ENCODE measurements at regions of chr7 and their contacts with region 1.

Region 1: GRCh38 chr7:64313740-64314491 is at the start of gene ZNF736:
- DNase-seq: peak; percentile 86 to 91 (median 89)
- H3K4me3 ChIP-seq: peak within 1 kb of the TSS; percentile 77 to 92 (median 91)
- H3K4me3 Mint-ChIP-seq: peak within 1 kb of the TSS; percentile 97 to 100
- H3K27ac ChIP-seq: peak within 1 kb of the TSS; percentile 81 to 98
- H3K27ac Mint-ChIP-seq: peak within 1 kb of the TSS; percentile 98 to 100 (median 100)
- H3K4me1 ChIP-seq: peaks cover 15 to 19% of the 10 kb centered on the region in 2 donors
- H3K4me1 Mint-ChIP-seq: peaks cover 23% of the 10 kb centered on the region
- H3K27me3 ChIP-seq: no peaks in the 10 kb centered on the region
- H3K27me3 Mint-ChIP-seq: peaks cover 0 to 1% (median 0%) of the 10 kb centered on the region in 3 donors
- CTCF ChIP-seq: no peak
- polyA plus RNA-seq, gene ZNF736: 1.3 to 7.1 (median 1.4) TPM

Region 2: GRCh38 chr7:63925623-63926460 is 388.1 kb before region 1 on chr7:
- intact Hi-C with region 1: loop called in 1 of 2 experiments (anchors 5 kb)
- DNase-seq: peak; percentile 78 to 88 (median 88)
- H3K4me3 ChIP-seq: peak overlapping the region; percentile 53 to 82 (median 82)
- H3K4me3 Mint-ChIP-seq: peak overlapping the region; percentile 92 to 93
- H3K27ac ChIP-seq: peak overlapping the region; percentile 65 to 84
- H3K27ac Mint-ChIP-seq: peak overlapping the region; percentile 84 to 97 (median 91)
- H3K4me1 ChIP-seq: peaks cover 13 to 21% of the 10 kb centered on the region in 2 donors
- H3K4me1 Mint-ChIP-seq: peaks cover 20% of the 10 kb centered on the region
- H3K27me3 ChIP-seq: no peaks in the 10 kb centered on the region
- H3K27me3 Mint-ChIP-seq: peaks cover 0 to 3% (median 2%) of the 10 kb centered on the region in 3 donors
- CTCF ChIP-seq: no peak

Region 3: GRCh38 chr7:64562626-64563275 is 248.8 kb after region 1 on chr7 and contains the start of gene ZNF680:
- intact Hi-C with region 1: loop called (anchors 5 kb)
- DNase-seq: peak; percentile 54 to 71 (median 65)
- H3K4me3 ChIP-seq: peak within 1 kb of the TSS; percentile 61 to 92 (median 66)
- H3K4me3 Mint-ChIP-seq: peak within 1 kb of the TSS; percentile 100
- H3K27ac ChIP-seq: peak within 1 kb of the TSS; percentile 46 to 82
- H3K27ac Mint-ChIP-seq: peak within 1 kb of the TSS; percentile 92 to 96 (median 95)
- H3K4me1 ChIP-seq: peaks cover 0 to 6% of the 10 kb centered on the region in 2 donors
- H3K4me1 Mint-ChIP-seq: peaks cover 11% of the 10 kb centered on the region
- H3K27me3 ChIP-seq: no peaks in the 10 kb centered on the region
- H3K27me3 Mint-ChIP-seq: peaks cover 2 to 5% (median 4%) of the 10 kb centered on the region in 3 donors
- CTCF ChIP-seq: no peak
- polyA plus RNA-seq, gene ZNF680: 0.69 to 1.6 (median 1.5) TPM

Region 4: GRCh38 chr7:64665980-64666662 is 352.2 kb after region 1 on chr7 and contains the start of gene ZNF107:
- intact Hi-C with region 1: loop called in 1 of 2 experiments (anchors 10 kb)
- DNase-seq: peak; percentile 55 to 75 (median 56)
- H3K4me3 ChIP-seq: peak within 1 kb of the TSS; percentile 76 to 93 (median 90)
- H3K4me3 Mint-ChIP-seq: peak within 1 kb of the TSS; percentile 96 to 98
- H3K27ac ChIP-seq: peak within 1 kb of the TSS; percentile 76 to 77
- H3K27ac Mint-ChIP-seq: peak within 1 kb of the TSS; percentile 86 to 95 (median 91)
- H3K4me1 ChIP-seq: peaks cover 12% of the 10 kb centered on the region in 2 donors
- H3K4me1 Mint-ChIP-seq: peaks cover 17% of the 10 kb centered on the region
- H3K27me3 ChIP-seq: no peaks in the 10 kb centered on the region
- H3K27me3 Mint-ChIP-seq: peaks cover 0 to 1% (median 0%) of the 10 kb centered on the region in 3 donors
- CTCF ChIP-seq: no peak
- polyA plus RNA-seq, gene ZNF107: 0.44 to 0.89 (median 0.65) TPM

Region 5: GRCh38 chr7:64794171-64794844 is 480.4 kb after region 1 on chr7 and contains the start of gene ZNF138:
- intact Hi-C with region 1: loop called in 1 of 2 experiments (anchors 10 kb)
- DNase-seq: peak; percentile 64 to 79 (median 67)
- H3K4me3 ChIP-seq: peak within 1 kb of the TSS; percentile 70 to 94 (median 91)
- H3K4me3 Mint-ChIP-seq: peak within 1 kb of the TSS; percentile 96 to 99
- H3K27ac ChIP-seq: peak within 1 kb of the TSS; percentile 50 to 82
- H3K27ac Mint-ChIP-seq: peak within 1 kb of the TSS; percentile 80 to 96 (median 92)
- H3K4me1 ChIP-seq: peaks cover 7 to 9% of the 10 kb centered on the region in 2 donors
- H3K4me1 Mint-ChIP-seq: peaks cover 18% of the 10 kb centered on the region
- H3K27me3 ChIP-seq: no peaks in the 10 kb centered on the region
- H3K27me3 Mint-ChIP-seq: peaks cover 0 to 7% (median 4%) of the 10 kb centered on the region in 3 donors
- CTCF ChIP-seq: no peak
- polyA plus RNA-seq, gene ZNF138: 0.89 to 1.1 (median 1.1) TPM

Region 6: GRCh38 chr7:64902806-64903721 is 589.1 kb after region 1 on chr7 and contains the start of gene ZNF273:
- intact Hi-C with region 1: loop called in 1 of 2 experiments (anchors 10 kb)
- DNase-seq: peak; percentile 41 to 72 (median 69)
- H3K4me3 ChIP-seq: peak within 1 kb of the TSS; percentile 61 to 87 (median 85)
- H3K4me3 Mint-ChIP-seq: peak within 1 kb of the TSS; percentile 97 to 99
- H3K27ac ChIP-seq: peak within 1 kb of the TSS; percentile 72 to 80
- H3K27ac Mint-ChIP-seq: peak within 1 kb of the TSS; percentile 90 to 96 (median 93)
- H3K4me1 ChIP-seq: peaks cover 9 to 13% of the 10 kb centered on the region in 2 donors
- H3K4me1 Mint-ChIP-seq: peaks cover 35% of the 10 kb centered on the region
- H3K27me3 ChIP-seq: no peaks in the 10 kb centered on the region
- H3K27me3 Mint-ChIP-seq: peaks cover 1 to 3% (median 1%) of the 10 kb centered on the region in 3 donors
- CTCF ChIP-seq: no peak
- polyA plus RNA-seq, gene ZNF273: 0.21 to 1.7 (median 0.62) TPM

Measured in CD14-positive monocyte (primary cell).